ENCODE measurements at regions of chr21 and their contacts with region 1.

Region 1: GRCh38 chr21:34630536-34631143 is 15.7 kb upstream of the RCAN1 start:
- DNase-seq: peak; percentile 60
- ATAC-seq: peak; percentile 76
- H3K4me3 ChIP-seq: no peak overlapping the region
- H3K27ac ChIP-seq: no peak overlapping the region
- H3K4me1 ChIP-seq: no peaks in the 10 kb centered on the region
- H3K27me3 ChIP-seq: peaks cover 59% of the 10 kb centered on the region
- CTCF ChIP-seq: peak; percentile 92
- POLR2A ChIP-seq: 0 out of 2 replicates have a peak, but pooled peaks have one; percentile 29
- RAD21 ChIP-seq: peak; percentile 98

Region 2: DNA sequence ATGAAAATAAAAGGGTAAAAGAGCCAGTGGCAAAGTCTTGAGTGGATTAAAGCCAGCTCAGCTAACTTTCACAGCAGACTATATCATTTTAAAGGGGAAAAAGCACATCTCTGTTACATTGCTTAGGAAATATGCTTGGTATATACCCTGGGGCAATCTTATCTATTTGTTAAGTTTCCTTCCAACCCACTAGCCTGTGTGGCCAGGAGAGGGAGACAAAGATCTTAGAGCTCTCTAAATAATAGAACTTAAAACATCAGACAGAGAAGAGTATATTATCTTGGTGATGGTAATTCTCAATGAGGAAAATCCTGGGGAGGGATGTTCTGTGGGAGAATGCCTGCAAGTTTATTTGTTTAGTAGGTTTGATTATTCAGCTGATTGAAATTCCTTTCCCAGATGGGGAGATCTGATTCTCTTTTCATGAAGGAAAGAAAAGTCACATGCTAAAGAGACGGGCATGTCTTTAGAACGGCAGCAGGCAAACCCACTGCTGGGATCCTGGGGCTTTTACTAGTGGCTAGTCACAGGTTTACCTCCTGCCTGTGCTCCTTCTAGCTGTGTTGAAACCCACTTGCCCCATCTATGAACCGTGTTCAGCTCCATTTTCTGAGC is 263.2 kb before region 1 on chr21:
- CTCF ChIA-PET with region 1: interaction called, 4 read pairs
- POLR2A ChIA-PET with region 1: no interaction called
- dilution Hi-C with region 1: no loop called
- in situ Hi-C with region 1: no loop called
- intact Hi-C with region 1: loop called (anchors 1 kb)
- DNase-seq: peak; percentile 82
- ATAC-seq: peak; percentile 98
- H3K4me3 ChIP-seq: no peak overlapping the region
- H3K27ac ChIP-seq: no peak overlapping the region
- H3K4me1 ChIP-seq: no peaks in the 10 kb centered on the region
- H3K27me3 ChIP-seq: peaks cover 22% of the 10 kb centered on the region
- CTCF ChIP-seq: peak; percentile 84
- POLR2A ChIP-seq: no peak
- RAD21 ChIP-seq: peak; percentile 66

Region 3: GRCh38 chr21:35138665-35139381 is 508.2 kb after region 1 on chr21:
- CTCF ChIA-PET with region 1: no interaction called
- POLR2A ChIA-PET with region 1: no interaction called
- dilution Hi-C with region 1: no loop called
- in situ Hi-C with region 1: no loop called
- intact Hi-C with region 1: no loop called
- DNase-seq: peak; percentile 95
- ATAC-seq: peak; percentile 50; the same call in 1 of the 2 replicates
- H3K4me3 ChIP-seq: no peak overlapping the region
- H3K27ac ChIP-seq: no peak overlapping the region
- H3K4me1 ChIP-seq: peaks cover 14% of the 10 kb centered on the region
- H3K27me3 ChIP-seq: no peaks in the 10 kb centered on the region
- CTCF ChIP-seq: no peak
- POLR2A ChIP-seq: no peak
- RAD21 ChIP-seq: 0 out of 2 replicates have a peak, but pooled peaks have one; percentile 2

Measured in IMR-90 (cell line).